CD14-positive monocyte (primary cell): ENCODE measurements at regions of chr7 and their contacts with region 1.

Region 1: DNA sequence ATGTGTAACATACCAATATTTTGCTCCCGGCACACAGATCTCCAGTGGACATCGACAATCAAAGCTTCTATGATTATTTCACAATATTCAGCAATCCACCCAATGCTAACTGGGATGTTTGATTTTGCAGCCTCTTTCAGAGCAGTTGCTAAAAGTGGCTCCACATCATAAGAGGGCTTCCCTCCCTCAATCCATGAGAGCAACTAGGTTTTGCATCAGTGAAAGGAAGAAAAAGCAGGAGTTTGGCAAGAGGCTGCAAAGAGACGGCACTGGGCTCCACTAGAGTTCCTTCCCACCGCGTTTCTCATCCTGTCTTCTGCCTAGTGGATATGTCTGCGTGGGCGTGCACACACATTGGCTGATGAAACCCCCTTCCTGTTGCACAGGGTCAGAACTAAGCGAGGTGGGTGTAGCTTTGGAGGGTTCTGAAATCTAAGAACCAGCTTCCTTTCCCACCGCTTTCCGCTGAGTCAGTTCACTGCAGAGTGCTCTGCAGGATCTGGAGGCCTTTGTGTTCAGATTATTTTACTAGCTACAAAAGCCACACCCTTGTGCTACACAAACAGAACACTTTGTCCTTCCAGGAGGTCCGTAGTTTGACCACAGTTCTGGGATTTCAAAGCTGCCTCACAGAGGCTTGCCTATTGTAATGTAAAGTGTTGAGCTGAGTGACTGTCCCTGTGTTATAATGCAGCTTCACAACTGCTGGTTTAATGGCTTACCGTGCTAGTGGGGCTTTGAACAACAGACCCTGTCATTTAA is 28.1 kb downstream of the ARL4A start:
- DNase-seq: peak; percentile 55 to 65 (median 60)
- H3K4me3 ChIP-seq: peak overlapping the region in 2 of 3 experiments; percentile 1 to 53
- H3K4me3 Mint-ChIP-seq: peak overlapping the region; percentile 68 to 87
- H3K27ac ChIP-seq: peak overlapping the region; percentile 13 to 63
- H3K27ac Mint-ChIP-seq: peak overlapping the region; percentile 75 to 93 (median 84)
- H3K4me1 ChIP-seq: peaks cover 51 to 66% of the 10 kb centered on the region in 2 donors
- H3K4me1 Mint-ChIP-seq: peaks cover 58% of the 10 kb centered on the region
- H3K27me3 ChIP-seq: no peaks in the 10 kb centered on the region
- H3K27me3 Mint-ChIP-seq: peaks cover 0 to 1% (median 0%) of the 10 kb centered on the region in 3 donors
- CTCF ChIP-seq: no peak

Region 2: GRCh38 chr7:12647364-12648219 is 68.0 kb before region 1 on chr7:
- intact Hi-C with region 1: loop called in 1 of 2 experiments (anchors 10 kb)
- DNase-seq: peak in 2 of 3 donors; percentile 23 to 38
- H3K4me3 ChIP-seq: no peak overlapping the region
- H3K4me3 Mint-ChIP-seq: no peak overlapping the region
- H3K27ac ChIP-seq: no peak overlapping the region
- H3K27ac Mint-ChIP-seq: no peak overlapping the region
- H3K4me1 ChIP-seq: peaks cover 4 to 11% of the 10 kb centered on the region in 2 donors
- H3K4me1 Mint-ChIP-seq: peaks cover 2% of the 10 kb centered on the region
- H3K27me3 ChIP-seq: no peaks in the 10 kb centered on the region
- H3K27me3 Mint-ChIP-seq: peaks cover 0 to 1% (median 0%) of the 10 kb centered on the region in 3 donors
- CTCF ChIP-seq: no peak